CD4-positive, alpha-beta memory T cell (primary cell): ENCODE measurements at regions of chr16 and their contacts with region 1.

Region 1: DNA sequence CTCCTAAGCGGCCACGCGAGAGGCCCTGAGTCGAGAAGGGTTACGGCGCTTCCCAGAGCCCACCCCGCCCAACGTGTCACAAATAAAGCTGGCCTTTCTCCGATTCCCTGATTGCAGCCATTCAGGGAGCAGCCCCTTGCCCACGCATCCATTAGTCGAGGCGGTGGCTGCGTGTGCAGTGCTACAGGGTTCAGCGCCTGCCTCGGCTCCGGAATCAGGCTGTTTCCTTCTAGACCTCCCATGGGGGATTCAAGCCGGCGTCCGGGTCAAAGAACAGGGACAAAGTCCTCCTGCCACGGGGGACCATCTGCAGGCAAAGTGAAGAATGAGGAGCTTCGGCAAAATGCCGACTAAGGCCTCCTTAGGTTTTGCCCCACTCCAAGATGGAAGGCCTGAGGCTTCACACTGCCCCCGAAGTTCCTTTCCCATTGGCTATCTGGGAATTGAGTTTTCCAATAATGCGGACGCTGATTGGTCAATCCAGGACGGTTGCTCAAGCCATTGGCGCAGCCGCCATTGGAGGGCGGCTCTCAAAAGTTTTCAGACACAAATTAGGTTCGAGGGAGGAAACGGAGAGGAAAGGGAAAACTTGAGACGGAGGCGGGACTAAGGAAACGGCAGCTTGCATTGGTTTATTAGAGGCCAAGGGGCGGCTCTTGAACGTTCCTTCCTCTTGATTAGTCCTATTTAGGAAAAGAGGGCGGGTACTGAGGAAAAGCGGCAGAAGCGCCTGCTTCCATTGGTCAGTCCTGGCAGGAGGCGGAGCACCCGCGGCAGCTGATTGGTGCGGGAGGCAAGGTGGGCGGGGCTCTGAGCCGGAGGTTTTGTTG is 430 bp upstream of the KATNB1 start:
- DNase-seq: peak; percentile 97 to 99 (median 99)
- H3K4me3 ChIP-seq: peak overlapping the region; percentile 91 to 95
- H3K4me3 Mint-ChIP-seq: peak overlapping the region; percentile 96 to 100 (median 98)
- H3K27ac ChIP-seq: peak overlapping the region; percentile 76
- H3K27ac Mint-ChIP-seq: peak overlapping the region; percentile 94 to 99 (median 96)
- H3K4me1 ChIP-seq: peaks cover 17% of the 10 kb centered on the region
- H3K4me1 Mint-ChIP-seq: peaks cover 14 to 37% (median 29%) of the 10 kb centered on the region in 4 donors
- H3K27me3 ChIP-seq: no peaks in the 10 kb centered on the region
- H3K27me3 Mint-ChIP-seq: no peaks in the 10 kb centered on the region

Region 2: DNA sequence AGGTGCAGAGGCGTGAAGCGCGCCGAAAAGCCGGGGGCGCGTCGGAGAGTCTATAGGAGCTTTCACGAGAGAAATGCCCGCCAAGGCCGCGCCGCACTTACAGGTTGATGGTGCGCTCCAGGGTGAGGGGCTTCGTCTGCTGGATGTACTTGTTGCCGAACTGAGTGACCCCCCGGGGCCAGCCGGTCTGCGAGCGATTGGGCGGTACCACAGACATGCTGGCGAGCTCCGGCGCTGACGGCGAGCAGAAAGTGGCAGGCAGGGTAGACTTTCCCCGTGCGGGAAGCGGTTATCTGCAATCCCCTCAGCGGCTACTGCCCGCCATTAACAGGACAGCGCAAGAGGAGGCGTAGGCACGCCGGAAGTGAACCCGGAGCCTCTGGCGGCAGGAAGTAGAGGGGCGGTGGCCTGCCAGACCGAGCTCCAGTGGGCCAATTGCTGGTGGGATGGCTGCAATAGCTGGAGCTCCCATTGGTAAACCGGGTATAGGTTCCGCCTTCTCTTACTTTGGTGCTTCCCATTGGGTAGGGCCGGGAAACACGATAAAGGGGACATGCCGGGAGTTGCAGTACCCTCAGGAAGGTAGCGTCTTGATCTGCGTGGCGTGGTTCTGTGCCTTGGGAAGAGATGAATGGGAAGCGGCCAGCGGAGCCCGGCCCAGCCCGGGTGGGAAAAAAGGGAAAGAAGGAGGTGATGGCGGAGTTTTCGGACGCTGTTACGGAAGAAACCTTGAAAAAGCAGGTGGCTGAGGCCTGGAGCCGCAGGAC is 1284.0 kb before region 1 on chr16 and contains the starts of genes NUDT21 and OGFOD1:
- CTCF ChIA-PET with region 1: no interaction called
- POLR2A ChIA-PET with region 1: no interaction called
- intact Hi-C with region 1: loop called (anchors 2 kb)
- DNase-seq: peak; percentile 92 to 97 (median 94)
- H3K4me3 ChIP-seq: peak within 1 kb of the TSS; percentile 54 to 95
- H3K4me3 Mint-ChIP-seq: peak within 1 kb of the TSS; percentile 96 to 100 (median 99)
- H3K27ac ChIP-seq: peak within 1 kb of the TSS; percentile 73
- H3K27ac Mint-ChIP-seq: peak within 1 kb of the TSS; percentile 89 to 100 (median 98)
- H3K4me1 ChIP-seq: peaks cover 57% of the 10 kb centered on the region
- H3K4me1 Mint-ChIP-seq: peaks cover 38 to 69% (median 56%) of the 10 kb centered on the region in 4 donors
- H3K27me3 ChIP-seq: no peaks in the 10 kb centered on the region
- H3K27me3 Mint-ChIP-seq: no peaks in the 10 kb centered on the region
- total RNA-seq, gene NUDT21: 109 to 110 TPM
- total RNA-seq, gene OGFOD1: 42.7 to 47.2 TPM

Region 3: DNA sequence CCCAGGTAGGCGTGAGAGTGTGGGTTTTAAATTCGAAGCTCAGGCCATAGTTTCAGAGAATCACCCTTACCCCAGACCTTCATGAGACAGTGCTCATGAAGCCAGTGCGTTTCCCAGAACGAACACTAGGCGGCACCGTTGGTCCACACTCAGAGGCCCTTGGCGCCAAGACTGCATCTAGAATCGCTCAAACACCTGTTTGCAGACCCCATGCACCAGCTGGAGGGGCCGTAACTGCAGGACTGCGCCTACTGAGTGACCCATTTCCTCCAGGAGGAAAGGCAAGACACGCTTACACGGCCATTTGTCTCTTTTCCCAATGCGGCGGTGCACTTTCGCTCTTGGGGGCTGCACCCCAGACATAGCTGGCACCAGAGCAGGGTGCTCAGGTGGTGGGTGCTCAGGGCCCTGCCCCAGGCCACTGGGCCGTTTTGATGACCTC is 158.7 kb before region 1 on chr16:
- CTCF ChIA-PET with region 1: interaction called, 16 read pairs
- POLR2A ChIA-PET with region 1: interaction called, 3 read pairs
- intact Hi-C with region 1: loop called (anchors 5 kb)
- DNase-seq: peak; percentile 69 to 79 (median 73)
- H3K4me3 ChIP-seq: no peak overlapping the region
- H3K4me3 Mint-ChIP-seq: peak overlapping the region in 2 of 8 donors; percentile 21 to 27
- H3K27ac ChIP-seq: no peak overlapping the region
- H3K27ac Mint-ChIP-seq: peak overlapping the region in 5 of 7 donors; percentile 6 to 65 (median 42)
- H3K4me1 ChIP-seq: peaks cover 30% of the 10 kb centered on the region
- H3K4me1 Mint-ChIP-seq: peaks cover 15 to 43% (median 31%) of the 10 kb centered on the region in 4 donors
- H3K27me3 ChIP-seq: no peaks in the 10 kb centered on the region
- H3K27me3 Mint-ChIP-seq: no peaks in the 10 kb centered on the region

Region 4: DNA sequence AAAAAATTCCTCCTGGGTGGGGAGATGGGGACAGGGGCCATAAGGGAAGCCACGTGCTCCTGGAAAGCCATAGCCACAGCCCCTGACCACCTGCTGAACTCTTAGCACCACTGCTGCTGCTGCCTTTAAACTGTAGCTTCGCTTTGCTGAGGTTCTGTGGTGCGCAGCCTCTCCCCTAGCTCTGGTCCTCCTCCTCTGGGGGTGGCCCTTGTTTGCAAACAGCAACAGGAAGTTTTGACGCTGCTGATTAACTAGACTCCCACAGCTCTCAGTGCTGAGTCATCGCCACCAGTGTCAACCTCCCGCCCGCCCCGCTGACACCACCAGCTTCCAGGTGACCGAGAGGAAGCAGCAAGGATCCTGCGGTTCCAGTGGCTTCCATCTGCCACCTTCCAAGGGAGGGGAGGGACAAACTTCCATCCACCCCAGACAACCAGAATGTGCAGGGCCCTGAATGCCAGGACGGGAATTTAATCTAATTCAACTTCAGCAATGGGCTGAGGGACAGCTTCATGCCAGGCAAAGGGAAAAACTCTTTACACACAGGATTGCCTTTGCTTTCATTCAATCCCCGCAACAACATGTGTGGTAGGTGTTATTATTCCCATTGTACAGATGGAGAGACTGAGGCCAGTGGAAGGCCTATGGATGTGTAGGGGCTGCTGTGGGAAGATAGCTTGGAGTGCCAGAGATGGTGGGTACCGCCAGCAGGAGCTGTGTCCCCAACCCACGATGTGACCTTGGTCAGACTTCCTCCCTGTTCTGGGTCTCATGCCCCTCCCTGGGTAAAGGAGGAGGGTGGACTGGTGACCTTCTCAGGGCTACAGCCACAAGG is 75.3 kb after region 1 on chr16:
- CTCF ChIA-PET with region 1: no interaction called
- POLR2A ChIA-PET with region 1: interaction called, 15 read pairs
- intact Hi-C with region 1: no loop called
- DNase-seq: peak; percentile 73 to 91 (median 78)
- H3K4me3 ChIP-seq: peak overlapping the region in 1 of 2 donors; percentile 38
- H3K4me3 Mint-ChIP-seq: peak overlapping the region in 7 of 8 donors; percentile 33 to 83 (median 67)
- H3K27ac ChIP-seq: peak overlapping the region; percentile 23
- H3K27ac Mint-ChIP-seq: peak overlapping the region; percentile 83 to 94 (median 91)
- H3K4me1 ChIP-seq: peaks cover 35% of the 10 kb centered on the region
- H3K4me1 Mint-ChIP-seq: peaks cover 16 to 51% (median 25%) of the 10 kb centered on the region in 4 donors
- H3K27me3 ChIP-seq: no peaks in the 10 kb centered on the region
- H3K27me3 Mint-ChIP-seq: peaks cover 2 to 7% of the 10 kb centered on the region in 2 donors

Region 5: DNA sequence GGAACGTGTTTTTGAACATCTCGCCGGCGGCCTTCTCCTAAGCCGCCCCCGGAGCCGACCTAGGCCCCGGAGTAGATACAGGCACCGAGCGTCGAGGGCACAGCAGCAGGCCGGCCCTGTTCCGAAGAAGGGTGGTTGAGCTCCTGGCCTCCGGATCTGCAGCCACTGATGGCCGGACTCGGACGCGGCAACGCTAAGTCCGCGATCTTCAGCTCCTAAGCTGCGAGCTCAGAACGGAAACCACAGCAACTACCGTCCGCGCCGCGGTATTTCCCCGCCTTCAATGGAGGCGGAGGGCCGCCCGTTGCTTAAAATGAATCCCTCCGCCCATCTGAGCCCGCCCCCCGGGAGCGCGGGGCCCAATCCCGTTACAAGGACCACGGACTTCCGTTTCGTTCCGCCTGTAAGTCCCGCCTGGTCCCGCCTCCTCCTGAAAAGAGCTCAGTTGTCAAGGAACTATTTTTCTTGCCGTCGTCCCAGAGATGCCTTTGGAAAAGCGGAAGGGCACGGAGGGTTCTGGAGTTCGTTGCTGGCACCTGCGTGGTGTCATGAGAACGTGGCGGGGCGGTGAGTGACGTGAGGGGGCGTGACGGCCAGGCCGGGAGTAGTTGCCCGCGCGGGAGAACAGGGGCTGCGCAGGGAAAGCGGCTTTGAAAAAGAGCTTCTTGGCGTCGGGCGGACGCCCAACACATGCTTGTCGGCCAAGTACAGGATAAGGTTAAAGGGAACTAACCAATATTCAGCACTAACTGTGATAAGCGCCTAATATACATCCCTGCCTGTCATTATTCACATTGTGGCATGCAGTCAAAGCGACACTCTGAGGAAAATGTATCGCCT is 394.2 kb after region 1 on chr16 and contains the start of gene CFAP20:
- CTCF ChIA-PET with region 1: no interaction called
- POLR2A ChIA-PET with region 1: interaction called, 4 read pairs
- intact Hi-C with region 1: loop called (anchors 1 kb)
- DNase-seq: peak; percentile 96 to 97 (median 97)
- H3K4me3 ChIP-seq: peak within 1 kb of the TSS; percentile 64 to 96
- H3K4me3 Mint-ChIP-seq: peak within 1 kb of the TSS; percentile 91 to 96 (median 94)
- H3K27ac ChIP-seq: peak within 1 kb of the TSS; percentile 82
- H3K27ac Mint-ChIP-seq: peak within 1 kb of the TSS; percentile 93 to 98 (median 97)
- H3K4me1 ChIP-seq: peaks cover 39% of the 10 kb centered on the region
- H3K4me1 Mint-ChIP-seq: peaks cover 37 to 51% (median 42%) of the 10 kb centered on the region in 4 donors
- H3K27me3 ChIP-seq: no peaks in the 10 kb centered on the region
- H3K27me3 Mint-ChIP-seq: no peaks in the 10 kb centered on the region
- total RNA-seq, gene CFAP20: 25.4 to 26.3 TPM

Region 6: DNA sequence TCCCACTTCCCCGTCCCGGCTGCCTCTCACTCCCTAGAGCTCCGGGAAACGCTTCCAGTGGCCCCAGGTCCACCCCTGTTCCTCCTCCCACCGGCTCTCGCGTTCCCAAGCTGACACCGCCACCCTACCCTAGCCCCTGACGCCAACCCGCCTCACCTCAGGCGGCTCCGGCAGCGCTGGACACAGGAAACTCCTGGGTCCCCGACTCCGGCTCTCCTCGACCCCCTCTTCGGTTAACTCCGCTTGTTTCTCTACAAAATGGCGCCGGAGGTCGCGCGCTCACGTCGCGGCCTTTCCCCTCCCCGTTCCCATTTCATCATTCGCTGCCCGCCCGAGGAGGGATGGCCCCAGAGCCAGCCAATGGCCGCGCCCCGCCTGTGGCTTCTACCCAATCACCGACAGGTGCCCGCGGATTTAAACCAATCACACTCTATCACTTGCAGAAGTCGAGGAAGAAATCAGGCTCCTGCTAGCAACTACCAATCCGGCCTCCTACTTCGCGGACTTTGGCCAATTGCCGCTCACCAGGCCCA is 894.5 kb after region 1 on chr16 and contains the start of gene CNOT1:
- CTCF ChIA-PET with region 1: no interaction called
- POLR2A ChIA-PET with region 1: no interaction called
- intact Hi-C with region 1: loop called (anchors 1 kb)
- DNase-seq: peak; percentile 99
- H3K4me3 ChIP-seq: peak within 1 kb of the TSS; percentile 89 to 99
- H3K4me3 Mint-ChIP-seq: peak within 1 kb of the TSS; percentile 97 to 100 (median 100)
- H3K27ac ChIP-seq: peak within 1 kb of the TSS; percentile 100
- H3K27ac Mint-ChIP-seq: peak within 1 kb of the TSS; percentile 99 to 100 (median 100)
- H3K4me1 ChIP-seq: peaks cover 33% of the 10 kb centered on the region
- H3K4me1 Mint-ChIP-seq: peaks cover 14 to 46% (median 29%) of the 10 kb centered on the region in 4 donors
- H3K27me3 ChIP-seq: no peaks in the 10 kb centered on the region
- H3K27me3 Mint-ChIP-seq: no peaks in the 10 kb centered on the region
- total RNA-seq, gene CNOT1: 251 to 262 TPM